Heart right ventricle (tissue), 16 donors: ENCODE measurements at regions of chr6 and their contacts with region 1.

Region 1: DNA sequence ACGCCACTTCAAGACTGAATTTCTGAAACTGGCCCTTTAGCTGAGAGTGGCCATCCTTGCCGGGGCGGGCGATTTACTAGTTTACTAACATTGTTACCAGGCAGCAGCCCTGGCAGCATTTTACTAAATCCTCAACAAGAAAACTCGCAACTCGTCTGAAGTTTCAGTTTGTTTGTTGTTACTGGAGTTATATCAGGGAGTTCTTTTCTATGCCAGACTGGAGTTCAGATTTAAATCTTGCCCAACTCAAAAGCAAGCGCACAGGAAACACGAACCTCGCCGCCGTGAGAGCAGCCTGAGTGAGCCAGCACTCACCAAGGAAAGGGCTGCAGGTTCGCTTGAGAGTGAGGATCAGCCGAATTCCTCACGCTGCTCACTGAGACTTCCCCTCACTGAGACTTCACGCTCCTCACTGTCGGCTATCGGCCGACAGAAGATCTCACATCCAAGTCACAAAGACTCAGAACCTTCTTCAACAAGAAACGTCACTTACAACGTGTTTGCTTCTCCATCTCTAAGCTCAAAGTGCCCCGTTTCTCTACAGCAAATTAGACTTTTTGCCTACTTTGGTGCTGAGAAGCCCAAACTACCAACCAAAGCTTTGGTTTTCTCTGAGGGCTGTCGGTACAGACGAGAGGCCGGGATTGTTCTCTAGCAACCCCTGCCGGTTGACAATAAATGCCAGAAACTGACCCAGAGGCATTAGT is 78.9 kb downstream of the OLIG3 start:
- DNase-seq: peak; percentile 19 to 57
- ATAC-seq: peak; percentile 74 to 92 (median 88)
- H3K4me3 ChIP-seq: peak overlapping the region; percentile 11 to 59 (median 48)
- H3K27ac ChIP-seq: peak overlapping the region in 9 of 10 donors; percentile 12 to 72 (median 61)
- H3K4me1 ChIP-seq: peaks cover 0 to 21% (median 5%) of the 10 kb centered on the region in 9 donors
- H3K27me3 ChIP-seq: peaks cover 0 to 37% (median 18%) of the 10 kb centered on the region in 7 donors
- CTCF ChIP-seq: peak; percentile 18 to 77 (median 62)

Region 2: GRCh38 chr6:135514706-135515105 is 1900.6 kb before region 1 on chr6:
- intact Hi-C with region 1: loop called in 1 of 10 experiments (anchors 5 kb)
- DNase-seq: no peak
- ATAC-seq: no peak
- H3K4me3 ChIP-seq: no peak overlapping the region
- H3K27ac ChIP-seq: no peak overlapping the region
- H3K4me1 ChIP-seq: no peaks in the 10 kb centered on the region
- H3K27me3 ChIP-seq: no peaks in the 10 kb centered on the region
- CTCF ChIP-seq: no peak

Region 3: DNA sequence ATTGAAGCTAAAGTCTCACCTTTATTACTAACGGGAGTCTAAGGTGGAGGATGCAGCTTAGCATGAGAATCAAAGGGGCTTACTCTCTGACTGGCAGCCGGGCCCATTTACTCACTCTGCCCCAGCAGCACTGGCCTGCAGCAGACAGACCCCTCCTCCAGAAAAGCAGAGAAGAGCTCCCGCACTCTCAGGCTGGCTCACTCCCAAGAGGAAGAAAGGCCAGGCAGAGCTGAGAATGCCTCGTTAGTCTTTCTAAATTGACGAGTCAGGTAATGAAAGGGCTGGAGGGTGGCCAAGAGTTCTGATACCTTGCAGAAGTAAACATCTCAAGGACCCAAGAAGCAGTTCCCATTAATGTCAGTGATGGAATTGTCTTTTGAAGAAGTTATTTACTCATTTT is 326.0 kb before region 1 on chr6:
- intact Hi-C with region 1: loop called in 8 of 10 experiments (anchors 10 kb)
- DNase-seq: no peak
- ATAC-seq: no peak
- H3K4me3 ChIP-seq: no peak overlapping the region
- H3K27ac ChIP-seq: no peak overlapping the region
- H3K4me1 ChIP-seq: peaks cover 0 to 3% (median 0%) of the 10 kb centered on the region in 9 donors
- H3K27me3 ChIP-seq: no peaks in the 10 kb centered on the region
- CTCF ChIP-seq: no peak

Region 4: DNA sequence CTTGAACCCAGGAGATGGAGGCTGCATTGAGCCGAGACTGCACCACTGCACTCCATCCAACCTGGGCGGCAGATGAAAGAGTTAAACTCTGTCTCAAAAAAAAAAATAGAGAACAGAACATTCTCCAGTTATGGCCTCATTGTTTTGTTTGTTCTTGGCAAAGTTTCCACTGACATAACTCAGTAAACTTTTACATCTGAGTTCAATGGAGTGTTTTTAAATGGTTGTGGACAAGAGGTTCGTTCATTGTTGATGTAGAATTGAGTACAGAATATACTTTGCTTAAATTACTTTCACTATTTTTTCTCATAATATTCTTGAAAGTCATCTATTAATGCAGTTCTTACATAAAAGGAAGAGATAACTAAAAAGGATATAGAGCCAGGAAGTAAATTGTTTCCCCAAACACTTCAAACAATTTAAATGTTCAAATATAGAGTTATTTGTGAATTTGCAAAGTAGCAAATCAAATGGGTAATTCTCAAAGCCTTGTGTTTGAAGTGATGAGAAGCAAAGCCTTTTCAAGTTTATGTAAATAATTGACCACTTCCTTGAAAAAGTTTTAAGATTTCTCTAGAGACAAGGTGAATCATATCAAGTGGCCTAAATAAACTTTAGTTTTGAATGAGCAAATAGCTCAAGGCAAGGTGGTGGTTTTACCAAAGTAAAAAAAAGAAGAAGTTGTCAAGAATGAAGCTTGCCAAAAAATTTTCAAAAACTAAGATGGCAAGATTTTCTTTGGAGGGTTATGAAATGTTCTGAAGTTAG is 153.7 kb before region 1 on chr6:
- intact Hi-C with region 1: loop called in 1 of 10 experiments (anchors 10 kb)
- DNase-seq: no peak
- ATAC-seq: peak in 6 of 8 donors; percentile 39 to 85 (median 62)
- H3K4me3 ChIP-seq: no peak overlapping the region
- H3K27ac ChIP-seq: peak overlapping the region; percentile 0 to 71 (median 49)
- H3K4me1 ChIP-seq: peaks cover 0 to 44% (median 18%) of the 10 kb centered on the region in 9 donors
- H3K27me3 ChIP-seq: no peaks in the 10 kb centered on the region
- CTCF ChIP-seq: no peak

Region 5: GRCh38 chr6:137313928-137314855 is 101.1 kb before region 1 on chr6:
- intact Hi-C with region 1: loop called in 2 of 10 experiments (anchors 10 kb)
- DNase-seq: peak; percentile 69 to 74
- ATAC-seq: peak; percentile 79 to 96 (median 91)
- H3K4me3 ChIP-seq: peak overlapping the region in 5 of 10 donors; percentile 2 to 35 (median 20)
- H3K27ac ChIP-seq: peak overlapping the region in 1 of 10 donors; percentile 10
- H3K4me1 ChIP-seq: peaks cover 0 to 27% (median 13%) of the 10 kb centered on the region in 9 donors
- H3K27me3 ChIP-seq: no peaks in the 10 kb centered on the region
- CTCF ChIP-seq: peak; percentile 65 to 86 (median 81)